ENCODE measurements at regions of chr2 and their contacts with region 1.

Region 1: GRCh38 chr2:145752091-145752806 is 1232.3 kb upstream of the ZEB2 start:
- DNase-seq: no peak
- ATAC-seq: peak; percentile 45
- H3K4me3 Mint-ChIP-seq: peak overlapping the region; percentile 37
- H3K27ac Mint-ChIP-seq: peak overlapping the region; percentile 77
- H3K4me1 Mint-ChIP-seq: peaks cover 64% of the 10 kb centered on the region
- H3K27me3 Mint-ChIP-seq: no peaks in the 10 kb centered on the region
- CTCF ChIP-seq: peak; percentile 73

Region 2: DNA sequence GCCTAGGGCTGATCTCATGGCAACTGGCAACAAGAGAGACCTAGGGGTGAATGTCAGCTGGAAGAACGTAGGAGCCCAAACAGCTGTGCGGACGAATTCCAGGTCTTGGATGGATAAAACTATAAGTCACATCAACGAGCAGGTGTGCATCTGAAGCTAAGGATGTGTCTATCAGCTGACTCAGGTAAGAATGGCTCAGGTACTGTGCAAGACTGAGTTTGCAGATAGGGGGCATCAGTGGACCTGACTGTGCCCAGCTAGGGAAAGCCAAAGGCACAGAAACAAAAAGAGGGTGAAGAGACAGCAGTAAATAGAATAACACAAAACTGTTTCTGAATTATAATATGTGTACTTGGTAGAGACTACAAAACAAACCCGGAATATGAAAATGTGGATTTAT is 1589.6 kb before region 1 on chr2:
- CTCF ChIA-PET with region 1: interaction called, 12 read pairs
- POLR2A ChIA-PET with region 1: no interaction called
- intact Hi-C with region 1: loop called (anchors 2 kb)
- DNase-seq: no peak
- ATAC-seq: peak; percentile 56
- H3K4me3 Mint-ChIP-seq: no peak overlapping the region
- H3K27ac Mint-ChIP-seq: no peak overlapping the region
- H3K4me1 Mint-ChIP-seq: peaks cover 7% of the 10 kb centered on the region
- H3K27me3 Mint-ChIP-seq: no peaks in the 10 kb centered on the region
- CTCF ChIP-seq: no peak

Region 3: GRCh38 chr2:144471305-144472045 is 1280.8 kb before region 1 on chr2:
- CTCF ChIA-PET with region 1: no interaction called
- POLR2A ChIA-PET with region 1: interaction called, 3 read pairs
- intact Hi-C with region 1: loop called (anchors 5 kb)
- DNase-seq: no peak
- ATAC-seq: peak; percentile 89
- H3K4me3 Mint-ChIP-seq: peak overlapping the region; percentile 52
- H3K27ac Mint-ChIP-seq: no peak overlapping the region
- H3K4me1 Mint-ChIP-seq: peaks cover 30% of the 10 kb centered on the region
- H3K27me3 Mint-ChIP-seq: no peaks in the 10 kb centered on the region
- CTCF ChIP-seq: no peak

Region 4: DNA sequence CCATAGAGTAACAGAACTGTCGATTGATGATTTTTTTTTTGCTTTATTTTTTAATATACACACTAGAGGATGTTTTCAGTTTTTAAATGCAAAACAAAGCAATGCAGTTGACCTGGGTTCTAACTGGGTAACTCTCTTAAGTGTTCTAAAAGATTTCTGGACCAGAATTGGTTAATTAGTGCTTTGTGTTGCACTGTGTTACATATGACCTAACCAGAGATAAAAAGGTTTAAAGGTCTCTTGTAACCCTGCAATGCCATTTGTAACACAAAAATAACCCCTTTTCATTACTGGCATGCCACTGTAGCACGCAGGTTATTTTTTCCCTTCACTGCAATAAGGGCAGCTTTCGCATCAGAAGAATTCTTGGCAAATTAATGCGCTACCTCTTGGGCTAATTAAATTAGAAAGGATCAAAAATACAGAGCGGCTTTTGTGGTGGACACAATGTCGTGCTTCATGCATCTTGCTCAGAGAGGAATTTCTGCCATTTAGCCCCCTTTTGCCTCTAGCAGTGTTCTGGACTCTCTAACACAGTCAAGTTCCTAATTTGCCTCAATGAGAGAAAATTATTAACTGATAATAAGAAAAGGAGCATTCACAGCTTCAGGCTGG is 981.5 kb before region 1 on chr2:
- CTCF ChIA-PET with region 1: no interaction called
- POLR2A ChIA-PET with region 1: no interaction called
- intact Hi-C with region 1: loop called (anchors 10 kb)
- DNase-seq: no peak
- ATAC-seq: no peak
- H3K4me3 Mint-ChIP-seq: no peak overlapping the region
- H3K27ac Mint-ChIP-seq: no peak overlapping the region
- H3K4me1 Mint-ChIP-seq: peaks cover 2% of the 10 kb centered on the region
- H3K27me3 Mint-ChIP-seq: no peaks in the 10 kb centered on the region
- CTCF ChIP-seq: no peak

Region 5: GRCh38 chr2:145356056-145356455 is 396.2 kb before region 1 on chr2:
- CTCF ChIA-PET with region 1: interaction called, 4 read pairs
- POLR2A ChIA-PET with region 1: no interaction called
- intact Hi-C with region 1: loop called (anchors 5 kb)
- DNase-seq: no peak
- ATAC-seq: no peak
- H3K4me3 Mint-ChIP-seq: no peak overlapping the region
- H3K27ac Mint-ChIP-seq: no peak overlapping the region
- H3K4me1 Mint-ChIP-seq: no peaks in the 10 kb centered on the region
- H3K27me3 Mint-ChIP-seq: no peaks in the 10 kb centered on the region
- CTCF ChIP-seq: no peak

Region 6: DNA sequence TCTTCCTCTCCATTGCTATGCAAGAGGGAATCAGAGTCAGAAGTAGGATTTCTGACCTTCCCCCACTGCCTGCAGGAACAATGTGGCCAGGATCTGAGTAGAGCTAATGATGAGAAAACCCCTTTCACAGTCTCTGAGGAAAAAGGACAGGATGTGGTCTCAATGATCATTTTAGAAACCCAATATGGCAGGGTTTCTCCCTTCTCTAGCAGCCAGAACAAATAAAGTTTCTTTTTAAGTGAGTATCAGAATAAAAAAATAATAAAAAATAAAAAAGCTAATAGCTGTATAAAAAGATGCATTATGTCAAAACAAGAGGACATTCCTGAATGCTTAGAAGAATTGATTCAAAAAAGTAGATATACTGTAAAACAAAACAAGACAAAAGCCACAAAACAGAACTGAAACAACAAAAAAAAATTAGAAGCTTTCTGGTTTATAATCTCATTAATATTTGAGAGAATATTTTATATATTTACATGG is 107.4 kb before region 1 on chr2:
- CTCF ChIA-PET with region 1: interaction called, 6 read pairs
- POLR2A ChIA-PET with region 1: interaction called, 7 read pairs
- intact Hi-C with region 1: loop called (anchors 1 kb)
- DNase-seq: no peak
- ATAC-seq: peak; percentile 86
- H3K4me3 Mint-ChIP-seq: peak overlapping the region; percentile 70
- H3K27ac Mint-ChIP-seq: peak overlapping the region; percentile 92
- H3K4me1 Mint-ChIP-seq: peaks cover 47% of the 10 kb centered on the region
- H3K27me3 Mint-ChIP-seq: no peaks in the 10 kb centered on the region
- CTCF ChIP-seq: no peak

Measured in activated B cell treated with CpG ODN at 0.5 μM for 24 hours (primary cell).